ENCODE measurements at regions of chr11 and their contacts with region 1.

Region 1: DNA sequence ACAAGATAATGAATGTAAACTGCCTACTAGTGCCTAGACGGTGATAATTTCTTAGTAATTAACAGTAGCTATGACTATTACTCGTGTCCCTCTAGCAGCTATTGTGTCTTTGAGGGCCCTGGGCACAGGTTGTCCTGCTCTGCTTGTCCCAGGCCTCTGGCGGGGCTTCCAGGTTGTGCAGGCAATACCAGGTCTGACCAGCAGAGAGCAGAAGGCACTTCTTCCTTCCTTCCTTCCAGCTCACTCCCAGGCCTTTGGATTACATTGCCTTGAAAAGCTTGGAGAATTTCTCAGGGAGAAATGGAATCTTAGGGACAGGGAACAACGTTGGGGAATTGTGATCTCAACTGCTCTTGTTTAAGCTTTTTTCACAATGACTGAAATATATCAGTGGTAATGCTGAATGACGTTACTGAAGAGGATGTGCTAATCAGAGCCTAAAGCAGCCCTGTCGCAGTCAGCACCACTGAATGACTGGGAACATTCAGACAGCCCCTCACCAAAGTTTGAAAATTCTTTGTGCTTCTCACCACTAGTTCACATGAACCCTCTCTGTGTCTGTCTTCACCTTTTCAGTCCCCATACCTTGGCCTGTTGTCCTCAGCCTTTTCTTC is 8.4 kb upstream of the CCKBR start:
- DNase-seq: peak; percentile 58 to 66
- ATAC-seq: peak; percentile 82 to 95 (median 86)
- H3K4me3 ChIP-seq: no peak overlapping the region
- H3K27ac ChIP-seq: peak overlapping the region in 4 of 10 donors; percentile 20 to 43 (median 32)
- H3K4me1 ChIP-seq: peaks cover 0 to 27% (median 6%) of the 10 kb centered on the region in 9 donors
- H3K27me3 ChIP-seq: peaks cover 0 to 7% (median 0%) of the 10 kb centered on the region in 7 donors
- CTCF ChIP-seq: peak; percentile 46 to 86 (median 77)

Region 2: GRCh38 chr11:6191742-6192141 is 59.5 kb before region 1 on chr11:
- intact Hi-C with region 1: no loop called
- DNase-seq: no peak
- ATAC-seq: peak in 1 of 8 donors; percentile 25
- H3K4me3 ChIP-seq: no peak overlapping the region
- H3K27ac ChIP-seq: no peak overlapping the region
- H3K4me1 ChIP-seq: peaks cover 0 to 6% (median 0%) of the 10 kb centered on the region in 9 donors
- H3K27me3 ChIP-seq: no peaks in the 10 kb centered on the region
- CTCF ChIP-seq: no peak

Region 3: DNA sequence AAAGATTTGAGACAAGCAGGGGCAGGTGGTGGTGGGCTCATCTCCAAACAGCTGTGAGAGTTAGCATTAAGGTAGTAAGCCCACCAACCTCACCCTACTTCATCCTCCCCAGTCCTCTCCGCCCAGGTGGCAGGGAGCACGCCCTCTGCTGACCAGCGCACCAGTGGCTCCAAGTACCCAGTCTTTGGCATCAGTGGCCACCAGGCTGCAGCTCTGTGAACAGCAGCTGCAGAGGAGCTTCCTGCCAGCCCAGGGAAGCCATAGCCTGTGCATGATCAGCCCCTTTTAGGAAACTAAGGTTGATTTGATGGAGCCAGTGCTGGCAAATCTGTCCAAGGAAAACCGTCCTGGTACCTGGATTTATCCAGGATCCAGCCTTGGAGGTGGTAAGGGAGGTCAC is 47.4 kb after region 1 on chr11:
- intact Hi-C with region 1: loop called in 2 of 10 experiments (anchors 5 kb)
- DNase-seq: peak; percentile 33 to 54
- ATAC-seq: peak in 6 of 8 donors; percentile 43 to 88 (median 74)
- H3K4me3 ChIP-seq: no peak overlapping the region
- H3K27ac ChIP-seq: no peak overlapping the region
- H3K4me1 ChIP-seq: no peaks in the 10 kb centered on the region
- H3K27me3 ChIP-seq: no peaks in the 10 kb centered on the region
- CTCF ChIP-seq: peak; percentile 19 to 75 (median 64)

Region 4: DNA sequence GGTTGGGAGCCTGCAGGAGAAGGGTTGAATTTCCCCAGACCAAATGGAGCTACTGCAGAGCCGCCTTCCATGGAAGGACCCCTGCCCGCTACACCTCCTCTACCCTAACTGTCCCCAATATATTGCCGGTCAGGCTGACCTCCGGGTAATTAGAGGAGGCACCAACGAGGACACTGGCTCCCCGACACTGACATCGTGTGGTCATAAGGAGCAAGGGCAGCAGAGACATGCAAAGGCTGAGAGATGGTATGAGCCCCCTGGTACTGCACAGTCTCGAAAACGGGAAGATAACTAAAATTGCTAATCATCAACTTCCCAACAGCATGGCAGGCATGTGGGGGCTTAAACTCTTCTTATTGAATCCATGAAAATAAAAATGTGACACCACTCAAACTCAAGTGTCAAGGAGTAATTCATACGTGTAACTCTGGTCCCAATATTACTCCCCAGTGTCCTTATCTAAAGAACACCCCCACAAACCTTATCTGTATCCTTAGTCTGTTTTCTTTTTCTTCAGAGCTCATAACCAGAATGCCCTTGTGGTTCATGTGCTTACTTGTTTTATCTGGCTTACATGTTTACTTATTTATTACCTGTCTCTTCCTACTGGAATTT is 64.7 kb after region 1 on chr11:
- intact Hi-C with region 1: loop called in 4 of 10 experiments (anchors 2 to 5 kb)
- DNase-seq: peak; percentile 49 to 51
- ATAC-seq: peak in 3 of 8 donors; percentile 11 to 32 (median 17)
- H3K4me3 ChIP-seq: peak overlapping the region in 5 of 10 donors; percentile 15 to 33 (median 22)
- H3K27ac ChIP-seq: peak overlapping the region in 5 of 10 donors; percentile 1 to 100 (median 33)
- H3K4me1 ChIP-seq: peaks cover 6 to 52% (median 33%) of the 10 kb centered on the region in 9 donors
- H3K27me3 ChIP-seq: peaks cover 0 to 21% (median 0%) of the 10 kb centered on the region in 7 donors
- CTCF ChIP-seq: peak; percentile 77 to 94 (median 88)

Region 5: GRCh38 chr11:6389921-6390724 is 138.9 kb after region 1 on chr11 and contains the start of gene SMPD1:
- intact Hi-C with region 1: no loop called
- DNase-seq: peak; percentile 94
- ATAC-seq: peak; percentile 98 to 99 (median 98)
- H3K4me3 ChIP-seq: peak within 1 kb of the TSS; percentile 66 to 98 (median 80)
- H3K27ac ChIP-seq: peak within 1 kb of the TSS; percentile 66 to 98 (median 90)
- H3K4me1 ChIP-seq: peaks cover 5 to 28% (median 22%) of the 10 kb centered on the region in 9 donors
- H3K27me3 ChIP-seq: no peaks in the 10 kb centered on the region
- CTCF ChIP-seq: no peak
- total RNA-seq, gene SMPD1: 57.4 to 88.1 (median 67.6) TPM

Region 6: GRCh38 chr11:6473481-6474422 is 222.5 kb after region 1 on chr11 and contains the start of gene TRIM3:
- intact Hi-C with region 1: no loop called
- DNase-seq: peak; percentile 95 to 97
- ATAC-seq: peak; percentile 84 to 95 (median 90)
- H3K4me3 ChIP-seq: peak within 1 kb of the TSS; percentile 54 to 97 (median 90)
- H3K27ac ChIP-seq: peak within 1 kb of the TSS; percentile 74 to 98 (median 94)
- H3K4me1 ChIP-seq: peaks cover 0 to 39% (median 27%) of the 10 kb centered on the region in 9 donors
- H3K27me3 ChIP-seq: no peaks in the 10 kb centered on the region
- CTCF ChIP-seq: peak in 4 of 9 donors; percentile 22 to 44 (median 32)
- total RNA-seq, gene TRIM3: 6.3 to 12.7 (median 8.7) TPM